ENCODE measurements at regions of chr12 and their contacts with region 1.

Region 1: DNA sequence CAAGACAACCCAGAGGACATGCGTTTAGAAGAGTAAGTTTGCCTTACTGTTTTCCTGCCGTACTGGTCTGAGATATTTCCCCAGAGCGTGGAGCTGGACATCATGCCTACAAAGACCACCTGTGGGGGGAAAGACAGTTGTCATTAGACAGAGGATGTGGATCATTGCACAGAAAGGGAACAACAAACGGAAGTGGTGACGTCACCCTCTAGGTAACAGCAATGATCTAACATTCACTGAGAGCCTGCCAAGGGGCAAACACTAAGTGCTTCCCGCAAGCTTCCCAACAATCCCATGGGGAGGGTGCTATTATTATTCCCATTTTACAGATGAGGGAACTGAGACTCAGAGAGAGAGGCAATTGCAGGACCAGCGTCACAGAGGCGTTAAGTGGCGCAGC is 48.5 kb downstream of the SVOP start:
- DNase-seq: no peak
- H3K4me3 ChIP-seq: no peak overlapping the region
- H3K27ac ChIP-seq: no peak overlapping the region
- H3K4me1 ChIP-seq: no peaks in the 10 kb centered on the region
- H3K27me3 ChIP-seq: no peaks in the 10 kb centered on the region
- CTCF ChIP-seq: no peak

Region 2: DNA sequence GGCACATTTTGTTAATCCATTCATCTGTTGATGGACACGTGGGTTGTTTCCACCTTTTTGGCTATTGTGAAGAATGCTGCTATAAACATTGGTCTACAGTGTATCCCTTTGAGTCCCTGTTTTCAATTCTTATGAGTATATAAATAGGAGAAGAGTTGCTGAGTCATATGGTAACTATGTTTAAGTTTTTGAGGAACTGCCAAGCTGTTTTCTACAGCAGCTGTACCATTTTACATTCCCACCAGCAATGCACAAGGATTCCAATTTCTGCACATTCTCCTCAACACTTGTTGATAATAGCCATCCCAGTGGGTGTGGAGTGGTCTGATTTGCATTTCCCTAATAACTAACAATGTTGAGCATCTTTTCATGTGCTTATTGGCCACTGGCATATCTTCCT is 55.4 kb after region 1 on chr12:
- CTCF ChIA-PET with region 1: no interaction called
- dilution Hi-C with region 1: loop called (anchors 5 kb)
- in situ Hi-C with region 1: no loop called
- intact Hi-C with region 1: no loop called
- DNase-seq: no peak
- H3K4me3 ChIP-seq: no peak overlapping the region
- H3K27ac ChIP-seq: no peak overlapping the region
- H3K4me1 ChIP-seq: no peaks in the 10 kb centered on the region
- H3K27me3 ChIP-seq: peaks cover 2% of the 10 kb centered on the region
- CTCF ChIP-seq: no peak

Measured in mammary epithelial cell (primary cell).